ENCODE measurements at regions of chr2 and their contacts with region 1.

Region 1: DNA sequence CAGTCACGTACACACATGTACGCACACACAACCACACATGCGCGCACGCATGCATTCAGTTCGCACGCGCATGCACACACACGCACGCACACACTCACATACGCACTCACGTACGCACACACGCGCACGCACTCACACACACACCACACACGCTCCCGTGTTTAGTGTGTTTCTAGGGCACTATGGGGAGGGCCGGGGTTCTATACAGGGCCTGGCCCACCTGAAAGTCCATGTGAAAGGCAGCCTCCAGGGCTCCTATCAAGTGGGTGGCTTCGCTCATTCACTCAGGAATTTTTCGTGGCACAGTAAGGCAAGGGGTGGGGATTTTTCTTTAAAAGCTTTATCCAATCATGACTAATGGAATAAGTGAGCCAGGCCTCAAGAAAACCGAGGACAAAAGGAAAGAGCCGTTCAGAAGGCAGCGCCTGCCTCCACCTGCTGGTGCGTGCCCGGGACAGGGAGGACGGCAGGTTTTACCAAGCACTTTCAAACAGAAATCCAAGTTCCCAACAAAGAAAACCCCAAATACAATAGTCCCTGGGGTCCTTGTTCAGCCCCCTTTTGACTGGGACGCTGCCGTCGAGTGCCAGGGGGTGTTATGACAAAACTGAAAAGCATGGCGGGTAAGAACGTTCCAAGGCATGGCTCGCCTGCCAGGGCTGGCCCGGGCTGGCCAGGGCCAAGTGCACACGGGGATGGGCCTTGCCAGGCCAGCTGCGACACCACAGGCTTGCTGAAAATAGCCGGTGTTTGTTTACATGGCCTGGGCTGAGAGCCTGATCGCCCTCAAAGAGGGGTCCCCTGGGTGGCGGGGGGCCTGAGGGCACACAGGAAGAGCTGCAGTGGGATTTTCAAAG is 110.0 kb downstream of the HDAC4 start:
- DNase-seq: peak; percentile 62
- H3K4me3 ChIP-seq: no peak overlapping the region
- H3K27ac ChIP-seq: peak overlapping the region; percentile 18
- H3K4me1 ChIP-seq: peaks cover 11% of the 10 kb centered on the region
- H3K27me3 ChIP-seq: no peaks in the 10 kb centered on the region
- CTCF ChIP-seq: peak in 1 of 2 donors; percentile 45

Region 2: DNA sequence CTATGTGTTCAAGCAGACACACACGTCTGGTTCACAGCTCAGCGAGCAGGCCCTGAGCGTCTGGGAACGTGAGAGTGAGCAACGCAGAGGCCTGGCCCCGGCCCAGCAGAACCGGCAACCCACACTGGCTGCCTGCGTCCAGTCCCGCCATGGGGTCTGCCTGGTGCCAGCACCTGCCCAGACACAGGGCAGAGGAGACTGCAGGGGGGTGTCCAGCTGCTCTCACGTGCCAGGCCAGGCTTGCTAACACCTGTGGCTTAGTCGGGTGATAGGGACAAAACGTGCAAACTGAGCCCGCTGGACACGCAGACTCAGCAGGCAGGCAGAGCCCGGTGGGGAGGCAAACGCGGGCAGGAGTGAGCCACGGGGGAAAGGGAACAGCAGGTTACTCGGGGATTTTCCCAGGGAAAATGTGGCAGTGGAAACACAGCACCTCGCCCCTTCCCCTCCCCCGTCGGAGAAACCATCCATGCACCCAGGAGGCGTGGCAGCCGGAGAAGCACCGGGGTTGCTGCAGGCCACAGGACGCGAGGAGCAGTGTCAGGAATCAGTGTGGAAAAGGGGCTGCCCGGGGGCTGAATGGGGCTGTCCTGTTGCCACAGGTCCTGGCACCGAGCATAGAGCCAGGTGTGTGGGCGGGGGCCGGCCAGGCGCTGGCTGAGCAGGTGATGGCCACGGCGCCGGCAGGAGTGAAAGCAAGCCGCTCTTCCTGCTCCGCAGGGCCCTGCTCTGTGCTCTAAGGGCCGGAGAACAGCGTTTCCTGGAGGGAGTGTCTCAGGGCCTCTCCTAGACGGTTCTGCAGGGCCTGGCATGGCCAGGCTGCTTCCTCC is 44.8 kb before region 1 on chr2:
- CTCF ChIA-PET with region 1: no interaction called
- dilution Hi-C with region 1: no loop called
- in situ Hi-C with region 1: no loop called
- intact Hi-C with region 1: loop called (anchors 2 kb)
- DNase-seq: peak; percentile 63
- H3K4me3 ChIP-seq: peak overlapping the region; percentile 21 to 51 (median 45)
- H3K27ac ChIP-seq: peak overlapping the region; percentile 76
- H3K4me1 ChIP-seq: peaks cover 23% of the 10 kb centered on the region
- H3K27me3 ChIP-seq: no peaks in the 10 kb centered on the region
- CTCF ChIP-seq: no peak

Measured in mammary epithelial cell (primary cell).